ENCODE measurements at regions of chr1 and their contacts with region 1.

Region 1: GRCh38 chr1:222465211-222466041 is 82.5 kb downstream of the HHIPL2 start:
- DNase-seq: peak; percentile 93 to 96
- ATAC-seq: peak; percentile 99 to 100 (median 100)
- H3K4me3 ChIP-seq: peak overlapping the region; percentile 56
- H3K27ac ChIP-seq: peak overlapping the region; percentile 77
- H3K4me1 ChIP-seq: no peaks in the 10 kb centered on the region
- H3K27me3 ChIP-seq: no peaks in the 10 kb centered on the region
- CTCF ChIP-seq: peak; percentile 100

Region 2: GRCh38 chr1:222617367-222617951 is 152.0 kb after region 1 on chr1:
- intact Hi-C with region 1: loop called in 1 of 2 experiments (anchors 5 kb)
- DNase-seq: peak; percentile 93 to 96
- ATAC-seq: peak; percentile 82 to 93 (median 90)
- H3K4me3 ChIP-seq: peak overlapping the region; percentile 71
- H3K27ac ChIP-seq: peak overlapping the region; percentile 13
- H3K4me1 ChIP-seq: peaks cover 8% of the 10 kb centered on the region
- H3K27me3 ChIP-seq: no peaks in the 10 kb centered on the region
- CTCF ChIP-seq: no peak

Region 3: GRCh38 chr1:222634180-222635013 is 169.0 kb after region 1 on chr1:
- intact Hi-C with region 1: loop called (anchors 1 to 5 kb)
- DNase-seq: no peak
- ATAC-seq: peak; percentile 67 to 93 (median 76)
- H3K4me3 ChIP-seq: no peak overlapping the region
- H3K27ac ChIP-seq: peak overlapping the region; percentile 20
- H3K4me1 ChIP-seq: no peaks in the 10 kb centered on the region
- H3K27me3 ChIP-seq: no peaks in the 10 kb centered on the region
- CTCF ChIP-seq: peak; percentile 91

Region 4: DNA sequence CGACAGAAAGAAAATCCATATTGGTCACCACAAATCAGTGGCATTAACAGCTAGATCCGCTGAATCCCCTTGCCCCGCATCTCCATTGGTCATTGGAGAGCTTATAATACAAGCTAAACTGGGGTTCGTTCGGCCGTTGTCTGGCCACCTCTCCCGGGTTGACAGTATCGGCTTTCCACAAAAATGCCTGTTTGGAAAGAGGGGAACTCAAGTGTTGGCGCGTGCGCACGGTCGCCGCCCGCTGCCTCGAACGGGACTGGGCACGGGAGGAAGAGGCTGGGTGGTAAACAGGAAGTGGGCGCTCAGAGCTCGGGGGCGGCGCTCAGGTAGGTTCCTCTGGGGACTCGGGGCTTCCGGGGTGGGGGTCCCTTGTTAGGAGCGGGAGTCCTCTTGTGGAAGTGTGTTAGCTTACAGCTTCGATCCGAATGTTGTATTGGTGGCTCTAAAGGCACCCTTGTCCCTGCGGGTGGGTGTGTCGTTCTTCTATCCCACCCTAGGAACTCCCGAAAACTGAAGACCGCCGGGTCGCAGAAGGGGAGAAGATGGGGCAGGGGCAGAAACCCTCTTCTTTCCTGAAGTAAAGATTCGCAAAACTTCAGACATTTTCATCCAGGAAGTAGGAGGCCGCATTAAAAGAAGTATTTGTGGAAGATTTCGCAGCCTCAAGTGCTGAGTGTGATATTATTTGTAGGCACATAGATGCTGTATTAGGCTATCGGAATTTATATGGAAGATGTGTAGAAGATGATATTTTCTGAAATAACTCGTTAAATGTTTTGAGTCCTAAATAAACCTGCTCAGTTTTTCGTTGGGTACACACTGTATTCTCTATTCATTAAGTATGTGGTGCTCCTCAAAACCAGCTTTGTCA is 247.9 kb after region 1 on chr1:
- intact Hi-C with region 1: loop called (anchors 10 kb)
- DNase-seq: peak; percentile 93 to 96
- ATAC-seq: peak; percentile 86 to 88 (median 88)
- H3K4me3 ChIP-seq: peak overlapping the region; percentile 88
- H3K27ac ChIP-seq: peak overlapping the region; percentile 99
- H3K4me1 ChIP-seq: peaks cover 21% of the 10 kb centered on the region
- H3K27me3 ChIP-seq: no peaks in the 10 kb centered on the region
- CTCF ChIP-seq: no peak

Region 5: DNA sequence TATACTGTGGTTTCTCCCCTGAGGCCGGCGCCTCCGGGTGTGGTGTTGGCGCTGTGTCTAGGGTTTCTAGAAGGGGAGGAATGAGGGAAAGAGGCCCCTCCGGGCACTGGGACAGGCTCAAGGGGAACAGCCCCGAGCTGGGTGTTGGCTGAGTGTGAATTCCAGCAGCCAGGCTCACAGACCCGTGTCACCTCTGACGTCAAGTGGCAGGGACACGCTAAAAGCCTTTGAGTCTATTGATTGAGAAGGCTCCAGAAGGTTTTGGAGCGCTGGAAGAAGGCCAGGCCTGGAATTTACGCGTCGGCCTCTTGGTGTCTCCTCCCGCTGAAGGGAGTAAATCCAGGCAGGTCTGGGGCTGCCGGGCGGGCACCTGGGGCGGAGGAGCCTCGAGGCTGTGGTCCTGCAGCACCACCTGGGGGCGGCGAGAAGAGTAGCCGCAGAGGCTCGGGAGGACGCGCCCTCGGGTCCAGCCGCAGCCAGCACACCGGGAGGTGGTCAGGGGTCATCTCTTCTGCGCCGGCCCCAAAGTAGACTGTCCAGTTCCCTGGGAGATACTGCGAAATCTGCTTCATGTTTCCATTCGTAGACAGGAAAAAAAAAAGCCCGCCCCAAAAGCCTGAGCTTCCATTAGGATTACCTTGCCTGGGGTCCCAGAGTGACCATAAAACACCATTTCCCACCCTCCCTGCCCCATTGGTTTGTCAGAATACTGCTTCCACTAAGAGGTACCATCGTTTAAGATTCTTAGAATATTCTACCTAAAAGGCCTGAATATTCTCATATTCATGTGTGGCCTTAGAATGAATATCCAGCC is 616.0 kb after region 1 on chr1:
- intact Hi-C with region 1: loop called in 1 of 2 experiments (anchors 10 kb)
- DNase-seq: peak; percentile 79 to 91
- ATAC-seq: peak; percentile 96 to 99 (median 98)
- H3K4me3 ChIP-seq: peak overlapping the region; percentile 55
- H3K27ac ChIP-seq: peak overlapping the region; percentile 51
- H3K4me1 ChIP-seq: no peaks in the 10 kb centered on the region
- H3K27me3 ChIP-seq: no peaks in the 10 kb centered on the region
- CTCF ChIP-seq: peak; percentile 96

Measured in psoas muscle (tissue), 8 donors.